B cell (primary cell): ENCODE measurements at regions of chr10 and their contacts with region 1.

Region 1: GRCh38 chr10:27369880-27370279 is 129.3 kb upstream of the ACBD5 start:
- DNase-seq: peak; percentile 21
- ATAC-seq: no peak
- H3K4me3 ChIP-seq: no peak overlapping the region
- H3K4me3 Mint-ChIP-seq: no peak overlapping the region
- H3K27ac ChIP-seq: no peak overlapping the region
- H3K27ac Mint-ChIP-seq: no peak overlapping the region
- H3K4me1 ChIP-seq: peaks cover 0 to 5% of the 10 kb centered on the region in 2 donors
- H3K4me1 Mint-ChIP-seq: peaks cover 10% of the 10 kb centered on the region
- H3K27me3 ChIP-seq: no peaks in the 10 kb centered on the region
- H3K27me3 Mint-ChIP-seq: no peaks in the 10 kb centered on the region
- CTCF ChIP-seq: peak; percentile 43

Region 2: DNA sequence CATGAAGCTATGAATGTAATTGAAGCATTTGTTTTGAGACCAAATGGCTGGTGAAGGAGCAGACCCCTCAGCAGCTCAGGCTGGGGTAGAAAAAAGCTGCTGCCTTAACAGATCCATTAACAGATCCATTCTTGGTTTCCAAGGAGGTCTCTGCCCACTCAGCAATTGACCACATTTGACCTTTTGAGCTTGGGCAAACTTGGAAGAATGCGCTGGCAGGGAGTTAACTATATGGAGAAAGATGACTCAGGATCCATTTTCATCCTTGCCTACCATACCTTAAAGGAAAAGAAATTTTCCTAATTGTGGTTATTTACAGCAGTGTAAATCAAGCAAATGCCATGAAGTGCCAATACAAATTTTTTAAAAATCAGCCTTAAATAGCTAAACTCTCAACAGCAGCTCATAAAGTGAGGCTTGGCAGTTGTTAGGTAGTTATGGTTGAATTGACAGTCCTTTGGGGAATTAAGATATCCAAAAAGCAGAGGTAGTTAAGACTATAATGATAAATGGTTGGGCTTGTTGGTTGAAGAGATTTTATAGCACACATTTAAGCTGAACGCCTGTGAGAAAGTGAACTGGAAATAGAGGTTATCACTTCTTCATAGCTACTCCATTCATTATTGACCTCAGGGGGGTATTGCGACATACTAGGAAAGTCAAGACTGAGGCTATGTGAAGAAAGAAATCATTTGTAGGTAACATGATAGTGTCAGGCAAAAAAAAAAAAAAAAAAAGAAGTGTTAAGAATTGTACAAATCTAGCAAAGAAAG is 291.8 kb after region 1 on chr10:
- CTCF ChIA-PET with region 1: no interaction called
- POLR2A ChIA-PET with region 1: no interaction called
- intact Hi-C with region 1: loop called (anchors 2 kb)
- DNase-seq: no peak
- ATAC-seq: no peak
- H3K4me3 ChIP-seq: no peak overlapping the region
- H3K4me3 Mint-ChIP-seq: no peak overlapping the region
- H3K27ac ChIP-seq: no peak overlapping the region
- H3K27ac Mint-ChIP-seq: no peak overlapping the region
- H3K4me1 ChIP-seq: no peaks in the 10 kb centered on the region
- H3K4me1 Mint-ChIP-seq: no peaks in the 10 kb centered on the region
- H3K27me3 ChIP-seq: peaks cover 0 to 4% (median 0%) of the 10 kb centered on the region in 4 experiments
- H3K27me3 Mint-ChIP-seq: peaks cover 28% of the 10 kb centered on the region
- CTCF ChIP-seq: no peak